ENCODE measurements at regions of chr19 and their contacts with region 1.

Region 1: DNA sequence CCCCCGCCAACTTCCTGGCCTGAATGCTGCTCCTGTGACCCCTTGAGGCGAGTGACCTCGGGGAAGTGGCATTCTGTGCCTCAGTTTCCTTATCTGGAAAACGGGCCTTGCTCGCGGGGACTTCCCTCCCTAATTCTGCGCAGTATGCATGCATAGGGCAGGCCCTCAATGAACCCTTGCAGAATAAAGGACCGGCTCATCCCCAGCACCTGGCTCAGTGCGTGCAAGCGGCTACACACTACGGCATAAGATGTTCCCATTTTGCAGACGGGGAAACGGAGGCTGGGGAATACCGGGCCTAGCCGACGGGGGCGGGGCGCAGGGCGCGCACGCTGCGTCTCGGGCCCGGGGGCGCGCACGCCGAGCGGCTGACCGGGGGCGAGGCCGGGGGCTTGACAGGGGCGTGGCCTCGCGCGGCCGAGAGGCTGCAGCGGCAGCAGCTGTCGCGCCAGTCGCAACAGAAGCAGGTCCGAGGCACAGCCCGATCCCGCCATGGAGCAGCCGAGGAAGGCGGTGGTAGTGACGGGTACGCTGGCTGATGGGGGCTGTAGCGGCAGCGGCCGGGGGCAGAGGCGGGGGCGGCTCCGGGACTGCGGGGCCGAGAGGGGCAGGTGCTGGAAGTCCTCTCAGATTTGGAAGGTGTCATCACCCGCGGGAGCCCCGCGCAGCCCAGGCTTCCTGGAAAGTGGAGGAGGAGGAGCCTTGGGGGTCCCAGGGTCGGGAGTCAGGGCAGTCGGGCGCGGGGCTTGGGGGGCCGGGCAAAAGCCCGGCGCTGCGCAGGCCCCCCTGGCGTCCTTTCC is at the start of gene PGPEP1:
- DNase-seq: peak; percentile 30 to 67 (median 62)
- H3K4me3 ChIP-seq: peak within 1 kb of the TSS; percentile 75 to 92 (median 81)
- H3K27ac ChIP-seq: peak within 1 kb of the TSS; percentile 72 to 87
- H3K4me1 ChIP-seq: peaks cover 2 to 31% (median 22%) of the 10 kb centered on the region in 4 experiments
- H3K27me3 ChIP-seq: no peaks in the 10 kb centered on the region

Region 2: GRCh38 chr19:18135712-18136584 is 204.4 kb before region 1 on chr19:
- CTCF ChIA-PET with region 1: no interaction called
- POLR2A ChIA-PET with region 1: no interaction called
- DNase-seq: no peak
- H3K4me3 ChIP-seq: no peak overlapping the region
- H3K27ac ChIP-seq: no peak overlapping the region
- H3K4me1 ChIP-seq: peaks cover 0 to 4% (median 0%) of the 10 kb centered on the region in 4 experiments
- H3K27me3 ChIP-seq: no peaks in the 10 kb centered on the region

Region 3: GRCh38 chr19:18328340-18329034 is 11.9 kb before region 1 on chr19:
- CTCF ChIA-PET with region 1: interaction called, 60 read pairs
- POLR2A ChIA-PET with region 1: no interaction called
- DNase-seq: peak; percentile 93 to 96 (median 94)
- H3K4me3 ChIP-seq: peak overlapping the region; percentile 11 to 77 (median 55)
- H3K27ac ChIP-seq: peak overlapping the region in 1 of 2 experiments; percentile 52
- H3K4me1 ChIP-seq: peaks cover 6 to 19% (median 12%) of the 10 kb centered on the region in 4 experiments
- H3K27me3 ChIP-seq: no peaks in the 10 kb centered on the region

Region 4: DNA sequence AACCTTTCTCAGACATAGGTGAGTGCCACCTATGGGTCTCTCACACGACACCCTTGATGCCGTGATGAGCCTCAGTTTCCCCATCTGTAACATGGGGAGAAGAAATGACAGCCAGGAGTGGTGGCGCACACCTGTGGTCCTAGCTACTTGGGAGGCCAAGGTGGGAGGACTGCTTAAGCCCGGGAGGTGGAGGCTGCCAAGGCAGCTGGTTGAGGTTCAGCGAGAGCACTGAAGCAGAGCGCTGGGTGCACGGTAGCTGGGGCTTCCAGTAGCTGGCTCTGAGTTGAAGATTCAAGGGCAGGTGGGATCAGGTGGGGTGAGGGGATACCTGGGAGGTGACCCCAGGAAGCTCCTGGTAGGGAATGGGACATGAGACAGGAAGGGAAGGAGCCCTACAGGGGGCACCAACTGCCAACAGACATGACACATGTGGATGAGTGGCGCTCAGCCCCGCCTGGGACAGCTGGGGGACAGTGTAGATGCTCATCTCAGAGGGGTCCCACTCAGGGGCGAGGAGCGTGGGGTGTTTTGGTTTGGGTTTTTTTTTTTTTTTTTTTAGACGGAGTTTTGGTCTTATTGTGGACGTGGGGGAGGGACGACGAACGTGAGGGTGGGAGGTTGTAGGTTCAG is 72.3 kb after region 1 on chr19:
- CTCF ChIA-PET with region 1: interaction called, 40 read pairs
- POLR2A ChIA-PET with region 1: interaction called, 3 read pairs
- DNase-seq: no peak
- H3K4me3 ChIP-seq: no peak overlapping the region
- H3K27ac ChIP-seq: no peak overlapping the region
- H3K4me1 ChIP-seq: peaks cover 3 to 50% (median 40%) of the 10 kb centered on the region in 4 experiments
- H3K27me3 ChIP-seq: no peaks in the 10 kb centered on the region

Region 5: GRCh38 chr19:18419195-18419698 is 78.9 kb after region 1 on chr19 and contains the start of gene SSBP4:
- CTCF ChIA-PET with region 1: interaction called, 40 read pairs
- POLR2A ChIA-PET with region 1: interaction called, 3 read pairs
- DNase-seq: peak; percentile 68 to 89 (median 85)
- H3K4me3 ChIP-seq: peak within 1 kb of the TSS; percentile 24 to 77 (median 65)
- H3K27ac ChIP-seq: peak within 1 kb of the TSS in 1 of 2 experiments; percentile 56
- H3K4me1 ChIP-seq: peaks cover 3 to 82% (median 74%) of the 10 kb centered on the region in 4 experiments
- H3K27me3 ChIP-seq: no peaks in the 10 kb centered on the region

Measured in common myeloid progenitor, CD34-positive (primary cell).